ENCODE measurements at regions of chr11 and their contacts with region 1.

Region 1: GRCh38 chr11:128290106-128290840 is 297.1 kb downstream of the ETS1 start:
- DNase-seq: peak; percentile 80
- ATAC-seq: peak; percentile 92
- H3K4me3 ChIP-seq: peak overlapping the region; percentile 53
- H3K27ac ChIP-seq: peak overlapping the region; percentile 75
- H3K4me1 ChIP-seq: peaks cover 25% of the 10 kb centered on the region
- H3K27me3 ChIP-seq: no peaks in the 10 kb centered on the region
- CTCF ChIP-seq: peak; percentile 71 to 89 (median 85)
- EP300 ChIP-seq: peak; percentile 10 to 24; a peak in 1 of 4 replicates
- POLR2A ChIP-seq: peak; percentile 43
- RAD21 ChIP-seq: peak; percentile 99

Region 2: DNA sequence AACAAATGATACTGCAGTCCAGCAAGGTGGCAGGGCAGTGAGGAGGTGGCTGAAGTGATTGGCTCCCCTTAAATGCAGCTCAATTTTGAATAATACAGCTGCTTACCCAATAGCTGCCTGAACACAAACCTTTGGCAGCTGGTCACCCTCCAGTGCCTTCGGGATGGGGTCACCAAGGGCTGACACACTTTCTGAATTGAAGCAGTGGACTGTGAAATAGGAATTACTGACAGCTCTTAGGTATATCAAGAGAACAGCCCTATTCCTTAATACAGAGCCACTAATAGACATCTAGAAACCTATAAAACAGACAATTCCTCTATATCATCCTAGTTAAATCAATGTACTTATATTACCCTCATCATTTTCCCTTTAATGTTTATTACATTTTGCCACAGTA is 815.5 kb before region 1 on chr11:
- CTCF ChIA-PET with region 1: no interaction called
- POLR2A ChIA-PET with region 1: no interaction called
- RAD21 ChIA-PET with region 1: no interaction called
- SMC1A ChIA-PET with region 1: no interaction called
- in situ Hi-C with region 1: no loop called
- intact Hi-C with region 1: no loop called
- DNase-seq: no peak
- ATAC-seq: no peak
- H3K4me3 ChIP-seq: no peak overlapping the region
- H3K27ac ChIP-seq: no peak overlapping the region
- H3K4me1 ChIP-seq: no peaks in the 10 kb centered on the region
- H3K27me3 ChIP-seq: no peaks in the 10 kb centered on the region
- CTCF ChIP-seq: no peak
- EP300 ChIP-seq: no peak
- POLR2A ChIP-seq: no peak
- RAD21 ChIP-seq: no peak

Region 3: GRCh38 chr11:128172046-128172878 is 118.0 kb before region 1 on chr11:
- CTCF ChIA-PET with region 1: interaction called, 7 read pairs
- POLR2A ChIA-PET with region 1: no interaction called
- RAD21 ChIA-PET with region 1: interaction called, 3 read pairs
- SMC1A ChIA-PET with region 1: interaction called, 6 read pairs
- in situ Hi-C with region 1: no loop called
- intact Hi-C with region 1: loop called (anchors 5 kb)
- DNase-seq: peak; percentile 38
- ATAC-seq: peak; percentile 93
- H3K4me3 ChIP-seq: no peak overlapping the region
- H3K27ac ChIP-seq: no peak overlapping the region
- H3K4me1 ChIP-seq: no peaks in the 10 kb centered on the region
- H3K27me3 ChIP-seq: no peaks in the 10 kb centered on the region; a peak in 2 of 4 replicates
- CTCF ChIP-seq: peak; percentile 68 to 91 (median 72)
- EP300 ChIP-seq: no peak
- POLR2A ChIP-seq: no peak
- RAD21 ChIP-seq: peak; percentile 97

Region 4: DNA sequence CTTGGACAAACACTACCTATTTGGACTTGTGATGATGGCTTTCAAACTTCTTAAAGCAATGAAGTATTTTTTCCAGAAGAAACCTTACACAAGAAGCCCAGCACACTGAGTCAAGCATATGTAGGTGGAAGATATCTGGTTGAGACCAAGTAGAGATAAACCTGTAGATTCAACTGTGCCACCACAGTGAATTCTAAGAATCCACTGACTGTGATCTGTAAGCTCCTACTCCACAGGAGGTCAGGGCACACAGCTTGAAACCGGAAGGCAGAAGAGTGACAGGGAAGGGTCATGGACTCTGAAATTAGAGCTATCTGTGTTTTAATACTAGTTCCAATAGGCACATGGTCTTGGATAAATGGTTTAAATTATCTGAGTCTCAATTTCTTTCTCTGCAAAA is 107.4 kb before region 1 on chr11:
- CTCF ChIA-PET with region 1: no interaction called
- POLR2A ChIA-PET with region 1: no interaction called
- RAD21 ChIA-PET with region 1: no interaction called
- SMC1A ChIA-PET with region 1: no interaction called
- in situ Hi-C with region 1: no loop called
- intact Hi-C with region 1: no loop called
- DNase-seq: no peak
- ATAC-seq: no peak
- H3K4me3 ChIP-seq: no peak overlapping the region
- H3K27ac ChIP-seq: no peak overlapping the region
- H3K4me1 ChIP-seq: no peaks in the 10 kb centered on the region
- H3K27me3 ChIP-seq: no peaks in the 10 kb centered on the region
- CTCF ChIP-seq: no peak
- EP300 ChIP-seq: no peak
- POLR2A ChIP-seq: no peak
- RAD21 ChIP-seq: no peak

Region 5: DNA sequence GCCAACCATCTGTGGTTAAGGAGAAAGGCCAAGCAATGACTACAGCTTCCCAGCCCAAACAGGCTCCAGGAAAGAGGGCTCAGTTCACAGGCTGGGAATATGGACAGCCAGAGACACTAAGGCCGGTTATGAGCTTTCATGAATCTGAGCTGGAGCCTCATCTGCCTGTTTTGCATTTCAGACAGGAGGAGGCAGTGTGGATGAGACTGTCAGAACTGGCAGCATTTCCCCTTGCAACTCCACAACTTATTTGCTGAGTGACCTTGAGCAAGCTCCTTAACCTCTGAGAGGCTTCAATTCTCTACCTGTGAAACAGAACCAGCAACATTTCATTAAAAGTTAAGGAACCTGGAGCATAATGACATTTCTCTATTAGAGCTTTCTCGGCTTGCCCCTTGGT is 33.1 kb after region 1 on chr11:
- CTCF ChIA-PET with region 1: interaction called, 23 read pairs
- POLR2A ChIA-PET with region 1: interaction called, 8 read pairs
- RAD21 ChIA-PET with region 1: interaction called, 32 read pairs
- SMC1A ChIA-PET with region 1: interaction called, 34 read pairs
- in situ Hi-C with region 1: no loop called
- intact Hi-C with region 1: loop called (anchors 1 kb)
- DNase-seq: no peak
- ATAC-seq: peak; percentile 43
- H3K4me3 ChIP-seq: no peak overlapping the region
- H3K27ac ChIP-seq: no peak overlapping the region
- H3K4me1 ChIP-seq: peaks cover 11% of the 10 kb centered on the region
- H3K27me3 ChIP-seq: no peaks in the 10 kb centered on the region
- CTCF ChIP-seq: peak; percentile 41 to 46 (median 45); a peak in 5 of 6 replicates
- EP300 ChIP-seq: no peak
- POLR2A ChIP-seq: no peak
- RAD21 ChIP-seq: peak; percentile 74

Region 6: GRCh38 chr11:128412847-128413791 is 122.8 kb after region 1 on chr11:
- CTCF ChIA-PET with region 1: interaction called, 5 read pairs
- POLR2A ChIA-PET with region 1: interaction called, 3 read pairs
- RAD21 ChIA-PET with region 1: interaction called, 9 read pairs
- SMC1A ChIA-PET with region 1: interaction called, 7 read pairs
- in situ Hi-C with region 1: no loop called
- intact Hi-C with region 1: loop called (anchors 1 kb)
- DNase-seq: peak; percentile 82
- ATAC-seq: peak; percentile 76
- H3K4me3 ChIP-seq: peak overlapping the region; percentile 47; the same call in 1 of the 2 replicates
- H3K27ac ChIP-seq: peak overlapping the region; percentile 75
- H3K4me1 ChIP-seq: peaks cover 6% of the 10 kb centered on the region
- H3K27me3 ChIP-seq: no peaks in the 10 kb centered on the region
- CTCF ChIP-seq: no peak
- EP300 ChIP-seq: peak; percentile 45 to 76; a peak in 2 of 4 replicates
- POLR2A ChIP-seq: no peak
- RAD21 ChIP-seq: no peak

Region 7: DNA sequence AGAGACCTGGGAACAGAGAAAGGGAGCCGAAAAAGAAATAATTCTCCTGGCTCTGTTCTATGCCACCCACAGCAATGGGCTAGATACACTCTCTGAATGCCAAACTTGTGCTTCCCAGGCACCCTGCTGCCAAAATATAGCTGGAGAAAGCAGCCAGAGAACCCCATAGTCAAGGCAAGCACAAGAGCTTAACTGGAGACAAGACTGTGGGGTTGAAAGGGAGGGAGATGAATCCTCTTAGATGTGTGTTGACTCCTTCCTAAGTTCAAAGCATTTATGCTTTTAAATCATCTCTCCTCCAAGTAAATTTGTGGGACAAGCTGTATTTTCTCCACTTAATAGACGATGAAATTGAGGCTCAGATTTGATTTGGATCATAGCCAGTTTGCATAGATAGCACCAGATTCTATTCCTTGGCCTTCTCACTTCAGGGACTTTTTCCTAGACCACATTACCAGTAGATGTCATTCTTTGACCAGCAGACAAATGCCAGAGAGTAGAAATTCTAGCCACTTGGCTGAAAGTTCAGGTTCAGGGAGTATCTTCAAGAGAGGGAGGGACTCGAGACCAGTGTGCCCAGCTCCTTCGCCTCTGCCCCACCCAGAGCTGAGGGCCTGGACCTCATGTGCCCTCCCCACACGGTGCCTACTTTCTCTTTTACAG is 313.6 kb after region 1 on chr11:
- CTCF ChIA-PET with region 1: interaction called, 15 read pairs
- POLR2A ChIA-PET with region 1: no interaction called
- RAD21 ChIA-PET with region 1: interaction called, 16 read pairs
- SMC1A ChIA-PET with region 1: interaction called, 6 read pairs
- in situ Hi-C with region 1: no loop called
- intact Hi-C with region 1: no loop called
- DNase-seq: peak; percentile 44
- ATAC-seq: peak; percentile 91
- H3K4me3 ChIP-seq: no peak overlapping the region
- H3K27ac ChIP-seq: no peak overlapping the region
- H3K4me1 ChIP-seq: peaks cover 6% of the 10 kb centered on the region
- H3K27me3 ChIP-seq: no peaks in the 10 kb centered on the region
- CTCF ChIP-seq: peak; percentile 5 to 68 (median 38); a peak in 5 of 6 replicates
- EP300 ChIP-seq: no peak
- POLR2A ChIP-seq: no peak
- RAD21 ChIP-seq: peak; percentile 87

Region 8: GRCh38 chr11:128624269-128625175 is 334.2 kb after region 1 on chr11:
- CTCF ChIA-PET with region 1: interaction called, 195 read pairs
- POLR2A ChIA-PET with region 1: interaction called, 3 read pairs
- RAD21 ChIA-PET with region 1: interaction called, 144 read pairs
- SMC1A ChIA-PET with region 1: interaction called, 200 read pairs
- in situ Hi-C with region 1: loop called (anchors 5 kb)
- intact Hi-C with region 1: no loop called
- DNase-seq: no peak
- ATAC-seq: peak; percentile 77
- H3K4me3 ChIP-seq: no peak overlapping the region
- H3K27ac ChIP-seq: peak overlapping the region; percentile 86
- H3K4me1 ChIP-seq: peaks cover 66% of the 10 kb centered on the region
- H3K27me3 ChIP-seq: no peaks in the 10 kb centered on the region
- CTCF ChIP-seq: no peak
- EP300 ChIP-seq: peak in 1 of 2 experiments; percentile 21; a peak in 1 of 4 replicates
- POLR2A ChIP-seq: no peak
- RAD21 ChIP-seq: no peak

Measured in GM12878 (cell line).